ENCODE measurements at regions of chr4 and their contacts with region 1.

Region 1: GRCh38 chr4:41204400-41204978 is 9.9 kb downstream of the APBB2 start:
- DNase-seq: no peak
- ATAC-seq: no peak
- H3K4me3 ChIP-seq: no peak overlapping the region
- H3K27ac ChIP-seq: no peak overlapping the region
- H3K4me1 ChIP-seq: peaks cover 6% of the 10 kb centered on the region; the same call in 1 of the 2 replicates
- H3K27me3 ChIP-seq: no peaks in the 10 kb centered on the region
- CTCF ChIP-seq: no peak
- EP300 ChIP-seq: no peak
- POLR2A ChIP-seq: no peak
- RAD21 ChIP-seq: no peak

Region 2: GRCh38 chr4:40992472-40993295 is 211.8 kb before region 1 on chr4:
- CTCF ChIA-PET with region 1: interaction called, 567 read pairs
- POLR2A ChIA-PET with region 1: no interaction called
- RAD21 ChIA-PET with region 1: interaction called, 6 read pairs
- SMC1A ChIA-PET with region 1: interaction called, 12 read pairs
- in situ Hi-C with region 1: no loop called
- intact Hi-C with region 1: no loop called
- DNase-seq: peak; percentile 78
- ATAC-seq: peak; percentile 85
- H3K4me3 ChIP-seq: peak overlapping the region; percentile 8
- H3K27ac ChIP-seq: peak overlapping the region; percentile 98
- H3K4me1 ChIP-seq: peaks cover 38% of the 10 kb centered on the region
- H3K27me3 ChIP-seq: no peaks in the 10 kb centered on the region
- CTCF ChIP-seq: no peak
- EP300 ChIP-seq: peak in 1 of 2 experiments; percentile 39; a peak in 1 of 4 replicates
- POLR2A ChIP-seq: peak; percentile 71
- RAD21 ChIP-seq: no peak

Region 3: GRCh38 chr4:41177016-41177415 is 27.5 kb before region 1 on chr4:
- CTCF ChIA-PET with region 1: interaction called, 13 read pairs
- POLR2A ChIA-PET with region 1: interaction called, 5 read pairs
- RAD21 ChIA-PET with region 1: interaction called, 11 read pairs
- SMC1A ChIA-PET with region 1: interaction called, 9 read pairs
- in situ Hi-C with region 1: no loop called
- intact Hi-C with region 1: no loop called
- DNase-seq: no peak
- ATAC-seq: peak; percentile 41
- H3K4me3 ChIP-seq: no peak overlapping the region
- H3K27ac ChIP-seq: peak overlapping the region; percentile 28; the same call in 1 of the 2 replicates
- H3K4me1 ChIP-seq: peaks cover 16% of the 10 kb centered on the region
- H3K27me3 ChIP-seq: no peaks in the 10 kb centered on the region
- CTCF ChIP-seq: no peak; a peak in 1 of 6 replicates
- EP300 ChIP-seq: no peak
- POLR2A ChIP-seq: no peak
- RAD21 ChIP-seq: no peak

Region 4: DNA sequence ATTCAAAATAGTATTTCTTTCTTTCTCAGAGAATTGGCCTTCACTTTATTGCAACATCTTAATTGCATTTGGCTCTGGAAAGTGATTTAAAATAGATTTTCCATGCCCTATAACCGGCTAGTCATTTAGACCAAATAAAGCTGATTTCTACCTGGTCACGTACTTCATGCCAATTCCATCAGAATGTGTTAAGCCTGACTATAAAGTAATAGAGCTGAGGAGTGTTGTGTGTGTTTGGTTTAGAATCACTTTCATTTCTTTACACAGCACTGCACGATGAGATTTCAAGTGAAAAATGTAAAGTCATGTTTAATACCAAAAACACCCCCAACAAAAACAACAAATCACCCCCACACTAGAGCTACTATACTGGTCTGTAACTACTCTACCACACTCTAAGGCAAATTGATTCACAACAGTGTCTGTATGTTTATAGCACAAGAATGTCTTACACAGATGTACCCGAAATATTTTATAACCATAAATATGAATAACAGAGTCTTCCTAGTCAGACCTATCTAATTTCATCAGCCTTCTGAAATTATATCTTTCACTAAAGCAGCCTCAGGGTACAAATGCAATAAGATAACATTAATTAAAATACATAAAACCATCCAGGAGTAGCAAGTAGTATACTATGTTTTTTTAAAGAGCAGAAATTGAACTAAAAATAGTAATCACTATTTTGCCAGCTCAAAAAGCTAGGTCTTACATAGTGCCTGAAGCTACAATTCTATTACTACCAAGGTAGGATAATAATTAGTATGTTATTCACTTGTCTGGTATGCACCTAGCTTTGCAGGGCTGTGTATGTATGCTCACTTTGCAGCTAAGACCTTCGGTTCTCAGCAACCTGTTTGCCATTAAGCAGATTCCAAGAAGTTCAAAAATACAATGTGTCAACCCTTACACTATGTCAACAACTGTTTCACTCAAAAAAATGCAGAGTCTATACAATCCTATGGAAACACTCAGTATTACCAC is 18.6 kb before region 1 on chr4:
- CTCF ChIA-PET with region 1: interaction called, 7 read pairs
- POLR2A ChIA-PET with region 1: interaction called, 5 read pairs
- RAD21 ChIA-PET with region 1: interaction called, 19 read pairs
- SMC1A ChIA-PET with region 1: interaction called, 23 read pairs
- in situ Hi-C with region 1: no loop called
- intact Hi-C with region 1: no loop called
- DNase-seq: no peak
- ATAC-seq: no peak; the same call in 2 of the 3 replicates
- H3K4me3 ChIP-seq: peak overlapping the region; percentile 56
- H3K27ac ChIP-seq: peak overlapping the region; percentile 72
- H3K4me1 ChIP-seq: peaks cover 13% of the 10 kb centered on the region
- H3K27me3 ChIP-seq: no peaks in the 10 kb centered on the region
- CTCF ChIP-seq: no peak
- EP300 ChIP-seq: no peak
- POLR2A ChIP-seq: no peak
- RAD21 ChIP-seq: no peak